Heart left ventricle (tissue), 16 donors: ENCODE measurements at regions of chr17 and their contacts with region 1.

Region 1: DNA sequence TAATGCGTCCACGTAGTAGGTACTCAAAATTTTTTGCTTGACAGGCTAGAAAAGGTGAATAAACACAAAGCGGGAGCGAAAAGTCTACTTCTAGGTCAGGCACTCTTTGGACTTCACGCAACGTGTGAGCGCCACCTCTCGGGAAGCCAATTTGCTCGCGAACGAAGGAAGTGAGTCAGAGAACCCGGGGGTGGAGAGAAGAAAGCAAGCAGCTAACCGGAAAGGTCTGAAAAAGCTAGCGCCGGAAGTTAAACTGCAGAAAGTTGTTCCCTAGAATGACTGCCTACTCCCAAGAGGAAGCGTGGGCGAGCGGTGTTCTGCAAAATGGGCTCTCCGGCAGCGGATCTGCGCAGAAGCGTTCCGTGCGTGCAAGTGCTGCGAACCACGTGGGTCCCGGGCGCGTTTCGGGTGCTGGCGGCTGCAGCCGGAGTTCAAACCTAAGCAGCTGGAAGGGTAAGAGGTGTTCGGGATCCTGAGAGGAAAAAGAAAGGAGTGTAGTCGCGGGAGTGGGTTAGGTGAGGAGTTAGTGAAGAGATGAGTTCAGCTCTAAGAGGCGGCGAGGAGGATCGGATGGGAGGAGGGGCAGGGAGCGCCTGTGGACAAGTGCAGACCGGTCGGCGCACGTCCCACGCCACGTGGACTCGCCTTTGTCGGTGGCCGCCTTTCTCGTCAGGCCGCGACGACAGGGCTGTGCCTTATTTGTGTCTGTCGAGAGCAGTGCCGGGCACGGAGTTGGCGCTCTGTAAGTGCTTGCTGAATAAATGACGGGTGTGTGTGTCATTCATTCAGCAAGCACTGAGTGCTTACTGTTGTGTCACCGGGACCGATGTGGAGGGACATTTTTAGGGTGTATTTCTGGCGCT is at the start of gene NME1:
- DNase-seq: peak; percentile 95 to 97 (median 96)
- ATAC-seq: peak; percentile 96 to 98 (median 97)
- H3K4me3 ChIP-seq: peak within 1 kb of the TSS; percentile 38 to 83 (median 76)
- H3K27ac ChIP-seq: peak within 1 kb of the TSS; percentile 54 to 95 (median 86)
- H3K4me1 ChIP-seq: peaks cover 0 to 23% (median 14%) of the 10 kb centered on the region in 12 donors
- H3K27me3 ChIP-seq: no peaks in the 10 kb centered on the region
- CTCF ChIP-seq: peak; percentile 60 to 98 (median 84)
- POLR2A ChIP-seq: peak in 1 of 2 donors; percentile 47
- total RNA-seq, gene NME1: 9.2 to 42.9 (median 23.4) TPM

Region 2: GRCh38 chr17:50853015-50853615 is 300.3 kb before region 1 on chr17:
- intact Hi-C with region 1: loop called in 2 of 10 experiments (anchors 10 kb)
- DNase-seq: no peak
- ATAC-seq: peak in 1 of 4 donors; percentile 18
- H3K4me3 ChIP-seq: peak overlapping the region in 1 of 12 donors; percentile 0
- H3K27ac ChIP-seq: peak overlapping the region in 11 of 12 donors; percentile 25 to 93 (median 83)
- H3K4me1 ChIP-seq: peaks cover 0 to 38% (median 15%) of the 10 kb centered on the region in 12 donors
- H3K27me3 ChIP-seq: no peaks in the 10 kb centered on the region
- CTCF ChIP-seq: no peak
- POLR2A ChIP-seq: no peak

Region 3: DNA sequence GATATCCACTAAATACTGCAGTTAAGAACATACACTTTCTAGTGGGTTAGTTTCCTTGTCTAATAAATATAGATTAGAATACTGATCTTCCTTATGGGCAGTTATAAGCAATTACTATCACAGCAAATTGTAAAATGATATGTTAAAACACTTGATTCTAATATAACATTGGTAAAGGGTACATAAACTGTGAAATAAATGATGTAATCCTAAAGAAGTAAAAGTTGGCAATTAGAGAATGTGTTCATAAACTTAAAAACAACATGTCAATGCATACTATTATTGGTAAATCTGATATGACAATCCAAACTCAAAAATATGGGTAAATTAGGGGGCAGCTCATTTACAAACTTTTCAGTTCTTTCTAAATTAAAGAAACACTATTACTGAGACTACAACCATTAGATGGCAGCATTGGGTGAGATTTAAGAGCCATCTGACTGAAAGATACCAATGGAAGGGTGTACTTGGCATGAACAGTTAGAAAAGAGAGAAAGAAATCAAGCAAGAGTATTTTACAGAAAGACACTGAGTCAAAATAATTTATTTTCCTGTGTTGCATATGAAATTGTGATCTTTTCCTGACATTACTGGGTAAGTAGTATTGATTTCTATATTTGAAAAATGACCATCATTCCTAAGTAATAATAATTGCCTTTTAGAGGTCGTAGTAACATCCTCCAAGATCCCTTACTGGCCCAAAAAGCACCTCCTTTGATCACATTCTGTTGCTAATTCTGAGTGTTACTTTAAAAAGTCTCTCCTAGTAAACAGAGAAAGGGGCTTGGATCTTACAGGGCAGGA is 152.4 kb before region 1 on chr17:
- intact Hi-C with region 1: loop called (anchors 1 to 5 kb)
- DNase-seq: no peak
- ATAC-seq: peak; percentile 59 to 65 (median 62)
- H3K4me3 ChIP-seq: no peak overlapping the region
- H3K27ac ChIP-seq: no peak overlapping the region
- H3K4me1 ChIP-seq: peaks cover 0 to 7% (median 0%) of the 10 kb centered on the region in 12 donors
- H3K27me3 ChIP-seq: no peaks in the 10 kb centered on the region
- CTCF ChIP-seq: peak; percentile 27 to 72 (median 57)
- POLR2A ChIP-seq: no peak

Region 4: GRCh38 chr17:51056813-51057510 is 96.5 kb before region 1 on chr17:
- intact Hi-C with region 1: loop called in 1 of 10 experiments (anchors 5 kb)
- DNase-seq: no peak
- ATAC-seq: peak; percentile 82 to 87 (median 86)
- H3K4me3 ChIP-seq: peak overlapping the region in 2 of 12 donors; percentile 2 to 16
- H3K27ac ChIP-seq: peak overlapping the region in 11 of 12 donors; percentile 41 to 73 (median 57)
- H3K4me1 ChIP-seq: peaks cover 0 to 26% (median 22%) of the 10 kb centered on the region in 12 donors
- H3K27me3 ChIP-seq: no peaks in the 10 kb centered on the region
- CTCF ChIP-seq: peak; percentile 12 to 76 (median 54)
- POLR2A ChIP-seq: no peak

Region 5: DNA sequence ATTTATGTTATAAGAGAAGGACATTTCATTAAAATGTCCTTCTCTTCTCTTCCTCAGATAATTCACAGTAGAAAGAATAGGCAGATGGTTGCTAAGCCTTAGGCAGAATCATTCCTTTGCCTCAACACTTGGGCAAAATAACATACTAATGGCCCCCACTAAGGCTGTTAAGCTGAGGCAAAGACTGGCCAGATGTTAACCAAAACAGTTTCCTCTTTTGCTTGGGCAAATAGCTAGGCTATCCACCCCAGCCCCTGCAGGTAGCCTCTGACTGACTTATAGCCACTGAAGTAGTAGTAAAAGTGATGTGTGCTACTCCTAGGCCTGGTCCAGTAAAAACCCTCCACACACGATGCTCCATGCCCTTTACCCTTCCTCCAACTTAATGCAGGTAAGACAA is 88.0 kb before region 1 on chr17:
- intact Hi-C with region 1: loop called in 1 of 10 experiments (anchors 5 kb)
- DNase-seq: no peak
- ATAC-seq: no peak
- H3K4me3 ChIP-seq: no peak overlapping the region
- H3K27ac ChIP-seq: no peak overlapping the region
- H3K4me1 ChIP-seq: peaks cover 0 to 20% (median 0%) of the 10 kb centered on the region in 12 donors
- H3K27me3 ChIP-seq: no peaks in the 10 kb centered on the region
- CTCF ChIP-seq: no peak
- POLR2A ChIP-seq: no peak

Region 6: DNA sequence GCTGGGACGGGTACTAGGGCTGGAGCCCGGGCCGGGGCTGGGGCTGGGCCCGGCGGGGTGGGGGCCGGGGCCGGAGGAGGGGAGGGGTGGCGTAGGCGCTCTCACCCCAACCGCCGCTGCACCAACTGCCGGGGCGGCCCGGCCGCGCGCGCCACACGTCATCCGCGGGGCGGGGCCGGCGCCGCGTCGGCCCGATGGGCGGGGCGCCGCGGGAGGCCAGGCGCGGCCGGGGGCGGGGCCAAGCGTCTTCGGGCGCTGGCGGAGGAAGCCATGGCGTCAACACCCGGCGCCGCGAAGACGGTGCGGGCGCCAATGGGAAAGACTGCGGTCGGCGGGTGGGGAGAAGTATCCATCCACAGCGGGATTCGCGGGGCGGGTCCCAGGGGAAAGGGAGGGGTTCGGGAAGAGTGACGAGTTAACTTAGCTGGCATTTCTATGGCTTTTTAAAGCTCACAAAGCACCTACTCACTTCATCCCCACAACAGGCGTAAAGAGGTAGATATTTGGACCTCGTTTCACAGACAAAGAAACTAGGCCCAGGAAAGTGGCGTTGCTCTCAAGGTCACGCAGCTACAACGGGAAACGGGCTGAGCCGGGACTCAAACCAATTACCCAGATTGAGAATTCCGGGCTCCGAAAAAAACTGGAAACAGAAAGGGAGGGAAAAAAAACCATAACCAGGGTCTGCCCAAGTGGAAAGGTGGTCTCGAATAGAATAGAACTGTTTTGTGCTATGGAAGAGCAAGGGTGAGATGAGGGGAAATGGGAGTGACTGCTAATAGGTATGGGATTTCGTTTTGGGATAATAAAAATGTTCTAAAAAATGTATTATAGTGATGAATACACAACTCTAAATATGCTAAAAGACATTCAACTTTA is 32.5 kb before region 1 on chr17 and contains the start of gene SPAG9:
- intact Hi-C with region 1: loop called in 7 of 10 experiments (anchors 1 to 5 kb)
- DNase-seq: peak; percentile 97 to 98 (median 98)
- ATAC-seq: peak; percentile 89 to 96 (median 92)
- H3K4me3 ChIP-seq: peak within 1 kb of the TSS; percentile 66 to 100 (median 96)
- H3K27ac ChIP-seq: peak within 1 kb of the TSS; percentile 95 to 100 (median 99)
- H3K4me1 ChIP-seq: peaks cover 8 to 49% (median 29%) of the 10 kb centered on the region in 12 donors
- H3K27me3 ChIP-seq: no peaks in the 10 kb centered on the region
- CTCF ChIP-seq: no peak
- POLR2A ChIP-seq: peak; percentile 57 to 82
- total RNA-seq, gene SPAG9: 35.8 to 65.4 (median 57.4) TPM

Region 7: GRCh38 chr17:51166197-51166986 is 13.0 kb after region 1 on chr17 and contains the start of gene NME2:
- intact Hi-C with region 1: loop called in 1 of 10 experiments (anchors 1 kb)
- DNase-seq: peak; percentile 91 to 95 (median 94)
- ATAC-seq: peak; percentile 89 to 97 (median 97)
- H3K4me3 ChIP-seq: peak within 1 kb of the TSS; percentile 76 to 95 (median 90)
- H3K27ac ChIP-seq: peak within 1 kb of the TSS; percentile 73 to 99 (median 95)
- H3K4me1 ChIP-seq: peaks cover 0 to 20% (median 14%) of the 10 kb centered on the region in 12 donors
- H3K27me3 ChIP-seq: no peaks in the 10 kb centered on the region
- CTCF ChIP-seq: no peak
- POLR2A ChIP-seq: peak in 1 of 2 donors; percentile 65
- total RNA-seq, gene NME2: 171 to 386 (median 245) TPM